ENCODE measurements at regions of chr22 and their contacts with region 1.

Region 1: DNA sequence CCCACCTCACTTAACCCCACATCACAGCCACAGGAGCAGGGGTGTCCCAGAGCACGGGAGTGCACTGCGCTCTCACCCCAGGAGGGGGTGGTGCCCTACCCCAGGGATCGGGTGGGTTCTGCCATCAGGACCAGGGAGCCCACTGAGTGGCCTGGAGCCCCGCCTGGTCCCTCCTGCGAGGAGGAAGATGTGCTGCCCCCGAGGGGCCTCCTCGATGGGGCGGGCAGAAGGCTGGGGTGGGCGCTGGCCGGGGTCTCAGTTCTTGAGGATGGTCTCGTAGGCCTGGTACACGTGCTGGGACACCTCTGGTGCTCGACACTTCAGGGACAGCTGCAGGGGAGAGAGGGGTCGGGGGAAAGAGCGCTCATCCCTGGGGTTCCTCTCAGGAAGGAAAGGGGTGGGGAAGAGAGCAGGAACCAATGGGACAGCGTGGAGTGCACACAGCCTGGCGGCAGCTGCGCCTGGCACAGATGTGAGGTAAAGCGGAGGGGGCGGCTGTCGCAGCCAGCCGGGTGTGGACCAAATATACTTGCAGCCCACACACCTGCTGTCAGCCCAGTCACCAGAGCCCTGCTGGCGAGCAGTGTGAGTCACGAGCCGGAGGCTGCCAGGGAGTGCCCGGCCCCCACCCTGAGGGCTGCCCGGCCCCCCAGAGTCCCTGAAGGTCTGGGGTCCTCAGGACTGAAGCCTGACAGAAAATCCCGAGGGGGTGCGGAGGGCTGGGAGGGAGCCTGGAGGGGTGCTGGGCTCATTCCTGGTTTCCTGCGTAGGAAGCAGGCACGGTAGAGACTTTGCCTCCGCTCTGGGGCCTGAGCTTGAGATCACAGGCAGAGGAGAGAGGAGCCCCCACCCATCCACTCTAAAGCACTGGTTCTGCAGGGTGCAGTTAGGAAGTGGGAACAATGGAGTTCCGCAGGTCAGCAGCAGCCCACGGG is 13.3 kb upstream of the RASL10A start:
- DNase-seq: peak; percentile 76 to 90
- ATAC-seq: peak; percentile 79 to 85
- H3K4me3 ChIP-seq: no peak overlapping the region
- H3K27ac ChIP-seq: peak overlapping the region; percentile 74 to 84 (median 81)
- H3K4me1 ChIP-seq: peaks cover 38 to 41% of the 10 kb centered on the region in 2 donors
- H3K27me3 ChIP-seq: no peaks in the 10 kb centered on the region
- CTCF ChIP-seq: peak in 1 of 5 experiments; percentile 25
- POLR2A ChIP-seq: peak in 1 of 2 donors; percentile 30

Region 2: GRCh38 chr22:28989035-28989464 is 339.8 kb before region 1 on chr22:
- in situ Hi-C with region 1: no loop called
- intact Hi-C with region 1: no loop called
- DNase-seq: no peak
- ATAC-seq: no peak
- H3K4me3 ChIP-seq: no peak overlapping the region
- H3K27ac ChIP-seq: no peak overlapping the region
- H3K4me1 ChIP-seq: peaks cover 20 to 23% of the 10 kb centered on the region in 2 donors
- H3K27me3 ChIP-seq: no peaks in the 10 kb centered on the region
- CTCF ChIP-seq: no peak
- POLR2A ChIP-seq: no peak

Region 3: GRCh38 chr22:29344137-29344536 is 15.3 kb after region 1 on chr22:
- in situ Hi-C with region 1: no loop called
- intact Hi-C with region 1: loop called (anchors 2 kb)
- DNase-seq: peak; percentile 83 to 93
- ATAC-seq: peak; percentile 69 to 74
- H3K4me3 ChIP-seq: no peak overlapping the region
- H3K27ac ChIP-seq: peak overlapping the region; percentile 74 to 85 (median 78)
- H3K4me1 ChIP-seq: peaks cover 55 to 60% of the 10 kb centered on the region in 2 donors
- H3K27me3 ChIP-seq: no peaks in the 10 kb centered on the region
- CTCF ChIP-seq: no peak
- POLR2A ChIP-seq: no peak

Region 4: GRCh38 chr22:29541845-29542244 is 213.0 kb after region 1 on chr22:
- in situ Hi-C with region 1: no loop called
- intact Hi-C with region 1: no loop called
- DNase-seq: no peak
- ATAC-seq: no peak
- H3K4me3 ChIP-seq: no peak overlapping the region
- H3K27ac ChIP-seq: no peak overlapping the region
- H3K4me1 ChIP-seq: no peaks in the 10 kb centered on the region
- H3K27me3 ChIP-seq: no peaks in the 10 kb centered on the region
- CTCF ChIP-seq: no peak
- POLR2A ChIP-seq: no peak

Region 5: DNA sequence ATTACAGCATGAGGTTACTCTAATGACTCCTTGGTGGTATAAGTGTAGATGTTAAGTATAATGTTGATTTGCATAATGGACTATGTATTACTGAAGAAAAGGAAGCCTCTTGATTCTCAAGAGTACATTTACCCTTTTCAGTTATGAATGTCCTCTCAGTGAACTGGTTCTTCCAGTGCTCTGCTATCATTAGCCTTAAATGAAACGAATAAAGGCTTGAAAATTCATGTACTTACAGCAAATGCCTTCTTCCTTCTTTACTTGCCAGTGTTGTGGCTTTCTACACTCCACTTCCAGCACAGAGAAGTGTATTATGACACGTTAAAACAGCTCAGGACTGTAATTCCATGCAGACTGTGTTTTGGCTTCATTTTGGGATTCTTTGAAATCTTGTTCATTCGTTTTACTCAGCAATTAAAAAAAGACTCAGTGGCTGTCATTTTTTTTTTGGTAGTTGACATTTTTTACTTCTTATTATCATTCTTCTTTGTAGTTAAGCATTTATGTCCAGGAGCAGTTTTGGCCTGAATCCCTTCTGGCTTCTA is 651.0 kb after region 1 on chr22:
- in situ Hi-C with region 1: no loop called
- intact Hi-C with region 1: no loop called
- DNase-seq: no peak
- ATAC-seq: peak in 1 of 2 donors; percentile 25
- H3K4me3 ChIP-seq: no peak overlapping the region
- H3K27ac ChIP-seq: peak overlapping the region; percentile 32 to 70 (median 54)
- H3K4me1 ChIP-seq: peaks cover 10 to 17% of the 10 kb centered on the region in 2 donors
- H3K27me3 ChIP-seq: no peaks in the 10 kb centered on the region
- CTCF ChIP-seq: no peak
- POLR2A ChIP-seq: no peak

Measured in gastrocnemius medialis (tissue), 4 donors.